ENCODE measurements at regions of chr17 and their contacts with region 1.

Region 1: DNA sequence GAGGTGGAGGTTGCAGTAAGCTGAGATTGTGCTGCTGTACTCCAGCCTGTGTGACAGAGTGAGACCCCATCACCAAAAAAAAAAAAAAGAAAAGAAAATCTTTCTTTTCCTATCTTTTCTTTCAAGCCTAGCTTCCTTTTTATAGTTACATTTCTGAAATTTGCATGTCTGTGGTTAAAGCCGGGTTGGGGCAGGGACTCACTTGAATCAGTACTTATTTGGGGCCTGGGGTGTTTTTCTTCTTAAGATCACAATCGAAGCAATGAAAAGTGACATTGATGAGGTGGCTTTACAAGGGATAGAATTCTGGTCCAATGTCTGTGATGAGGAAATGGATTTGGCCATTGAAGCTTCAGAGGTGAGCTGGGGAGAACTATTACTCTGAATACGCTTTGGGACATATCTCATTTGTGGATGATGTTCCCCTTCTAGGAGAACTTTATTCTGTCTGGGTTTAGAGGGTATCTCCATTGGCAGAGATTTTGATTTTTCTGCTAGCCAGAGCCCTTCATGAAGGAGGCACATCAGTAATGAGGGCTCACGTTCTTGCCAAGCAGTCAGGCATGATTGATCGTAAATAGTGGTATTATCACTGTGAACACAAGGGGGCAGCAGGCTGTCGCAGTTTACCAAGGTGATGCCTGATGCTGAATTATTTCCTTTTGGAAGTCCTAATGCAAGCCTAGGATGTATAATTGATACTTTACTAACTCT is 14.3 kb downstream of the KPNB1 start:
- DNase-seq: peak; percentile 48
- ATAC-seq: peak; percentile 88
- H3K4me3 ChIP-seq: no peak overlapping the region
- H3K27ac ChIP-seq: 0 out of 2 replicates have a peak overlapping the region, but pooled peaks have one; percentile 0
- H3K4me1 ChIP-seq: no peaks in the 10 kb centered on the region
- H3K27me3 ChIP-seq: no peaks in the 10 kb centered on the region
- CTCF ChIP-seq: peak; percentile 71 to 97 (median 87)
- POLR2A ChIP-seq: no peak
- RAD21 ChIP-seq: peak; percentile 74

Region 2: DNA sequence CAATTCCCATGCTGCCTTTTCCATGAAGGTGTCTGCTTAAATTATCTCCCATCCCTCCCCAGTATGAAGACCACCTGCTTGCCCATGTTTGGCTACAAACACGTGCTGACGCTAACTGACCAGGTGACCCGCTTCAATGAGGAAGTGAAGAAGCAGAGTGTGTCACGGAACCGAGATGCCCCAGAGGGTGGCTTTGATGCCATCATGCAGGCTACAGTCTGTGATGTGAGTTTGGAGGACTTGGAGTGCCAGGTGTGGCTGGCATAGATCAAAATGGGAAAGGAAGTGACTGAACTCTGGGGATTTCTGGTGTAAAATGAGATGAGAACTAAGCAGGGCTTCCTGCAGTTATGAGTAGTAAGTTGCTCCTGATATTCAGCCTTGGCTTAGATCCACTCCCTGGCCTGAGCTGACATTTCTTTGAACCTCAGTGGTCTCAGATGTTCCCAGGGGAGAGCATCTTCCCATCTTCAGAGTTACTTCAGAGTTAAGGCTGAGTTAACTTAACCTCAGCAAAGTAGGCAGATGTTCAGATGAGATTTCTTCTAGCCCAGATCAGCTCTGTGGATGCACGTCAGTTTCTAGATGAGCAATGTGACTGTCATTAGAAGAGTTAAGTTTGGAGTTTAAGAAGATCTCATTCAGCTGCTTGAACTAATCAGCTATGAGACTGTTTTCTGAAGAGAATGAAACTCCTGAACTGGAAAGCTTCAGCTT is 377.7 kb before region 1 on chr17:
- CTCF ChIA-PET with region 1: no interaction called
- POLR2A ChIA-PET with region 1: no interaction called
- RAD21 ChIA-PET with region 1: no interaction called
- intact Hi-C with region 1: no loop called
- DNase-seq: no peak
- ATAC-seq: no peak
- H3K4me3 ChIP-seq: no peak overlapping the region
- H3K27ac ChIP-seq: no peak overlapping the region
- H3K4me1 ChIP-seq: peaks cover 5 to 11% of the 10 kb centered on the region in 2 experiments; a peak in 3 of 4 replicates
- H3K27me3 ChIP-seq: no peaks in the 10 kb centered on the region
- CTCF ChIP-seq: no peak
- POLR2A ChIP-seq: no peak
- RAD21 ChIP-seq: no peak

Region 3: DNA sequence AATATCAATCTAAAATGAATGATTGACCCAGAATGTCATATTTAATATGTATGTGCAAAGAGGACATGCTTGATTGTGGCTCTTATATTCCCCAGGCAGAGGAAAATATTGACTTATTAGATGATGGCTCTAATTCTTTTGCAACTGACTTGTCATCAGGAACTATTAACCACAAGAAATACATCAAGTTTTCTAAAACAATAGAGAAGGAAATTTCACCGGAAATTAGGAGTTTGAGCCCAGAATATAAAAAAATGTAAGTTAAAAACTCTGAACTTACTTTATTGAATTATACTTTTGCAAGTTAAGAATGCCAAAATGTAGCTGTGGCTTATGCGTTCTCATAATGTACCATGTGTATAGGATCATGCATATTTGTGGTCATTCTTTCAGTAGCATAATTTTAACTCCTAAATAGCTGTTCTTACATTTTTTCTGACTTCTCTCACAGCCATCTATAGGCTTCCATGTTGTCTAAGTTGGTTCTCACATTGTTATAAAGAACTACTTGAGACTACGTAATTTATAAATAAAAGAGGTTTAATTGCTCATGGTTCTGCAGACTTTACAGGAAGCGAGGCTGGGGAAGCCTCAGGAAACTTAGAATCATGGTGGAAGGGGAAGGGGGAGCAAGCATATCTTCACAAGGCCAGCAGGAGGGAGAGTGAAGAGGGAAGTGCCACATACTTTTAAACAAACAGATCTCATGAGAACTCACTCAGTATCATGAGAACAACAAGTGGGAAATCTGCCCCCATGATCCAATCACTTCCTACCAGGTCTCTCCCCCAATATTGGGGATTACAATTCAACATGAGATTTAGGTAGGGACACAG is 328.8 kb before region 1 on chr17:
- CTCF ChIA-PET with region 1: no interaction called
- POLR2A ChIA-PET with region 1: no interaction called
- RAD21 ChIA-PET with region 1: no interaction called
- intact Hi-C with region 1: no loop called
- DNase-seq: no peak
- ATAC-seq: no peak
- H3K4me3 ChIP-seq: no peak overlapping the region
- H3K27ac ChIP-seq: no peak overlapping the region
- H3K4me1 ChIP-seq: no peaks in the 10 kb centered on the region
- H3K27me3 ChIP-seq: no peaks in the 10 kb centered on the region
- CTCF ChIP-seq: no peak
- POLR2A ChIP-seq: no peak
- RAD21 ChIP-seq: no peak

Region 4: GRCh38 chr17:47649153-47649971 is 14.7 kb before region 1 on chr17 and contains the start of gene KPNB1:
- CTCF ChIA-PET with region 1: interaction called, 11 read pairs
- POLR2A ChIA-PET with region 1: interaction called, 16 read pairs
- RAD21 ChIA-PET with region 1: interaction called in 1 of 2 experiments, 3 read pairs
- intact Hi-C with region 1: loop called (anchors 2 kb)
- DNase-seq: peak; percentile 100
- ATAC-seq: peak; percentile 86
- H3K4me3 ChIP-seq: peak within 1 kb of the TSS; percentile 78 to 83
- H3K27ac ChIP-seq: peak within 1 kb of the TSS; percentile 92
- H3K4me1 ChIP-seq: peaks cover 14 to 21% of the 10 kb centered on the region in 2 experiments; a peak in 3 of 4 replicates
- H3K27me3 ChIP-seq: no peaks in the 10 kb centered on the region
- CTCF ChIP-seq: no peak
- POLR2A ChIP-seq: peak; percentile 79
- RAD21 ChIP-seq: no peak
- total RNA-seq, gene KPNB1: 526 TPM

Region 5: GRCh38 chr17:47742319-47743181 is 78.5 kb after region 1 on chr17:
- CTCF ChIA-PET with region 1: no interaction called
- POLR2A ChIA-PET with region 1: no interaction called
- RAD21 ChIA-PET with region 1: no interaction called
- intact Hi-C with region 1: loop called (anchors 2 kb)
- DNase-seq: no peak
- ATAC-seq: peak; percentile 79
- H3K4me3 ChIP-seq: no peak overlapping the region
- H3K27ac ChIP-seq: no peak overlapping the region
- H3K4me1 ChIP-seq: no peaks in the 10 kb centered on the region
- H3K27me3 ChIP-seq: 0 out of 2 replicates have a peak, but pooled peaks cover 4% of the 10 kb centered on the region
- CTCF ChIP-seq: peak; percentile 45 to 54 (median 46); a peak in 5 of 6 replicates
- POLR2A ChIP-seq: no peak
- RAD21 ChIP-seq: peak; percentile 76

Region 6: DNA sequence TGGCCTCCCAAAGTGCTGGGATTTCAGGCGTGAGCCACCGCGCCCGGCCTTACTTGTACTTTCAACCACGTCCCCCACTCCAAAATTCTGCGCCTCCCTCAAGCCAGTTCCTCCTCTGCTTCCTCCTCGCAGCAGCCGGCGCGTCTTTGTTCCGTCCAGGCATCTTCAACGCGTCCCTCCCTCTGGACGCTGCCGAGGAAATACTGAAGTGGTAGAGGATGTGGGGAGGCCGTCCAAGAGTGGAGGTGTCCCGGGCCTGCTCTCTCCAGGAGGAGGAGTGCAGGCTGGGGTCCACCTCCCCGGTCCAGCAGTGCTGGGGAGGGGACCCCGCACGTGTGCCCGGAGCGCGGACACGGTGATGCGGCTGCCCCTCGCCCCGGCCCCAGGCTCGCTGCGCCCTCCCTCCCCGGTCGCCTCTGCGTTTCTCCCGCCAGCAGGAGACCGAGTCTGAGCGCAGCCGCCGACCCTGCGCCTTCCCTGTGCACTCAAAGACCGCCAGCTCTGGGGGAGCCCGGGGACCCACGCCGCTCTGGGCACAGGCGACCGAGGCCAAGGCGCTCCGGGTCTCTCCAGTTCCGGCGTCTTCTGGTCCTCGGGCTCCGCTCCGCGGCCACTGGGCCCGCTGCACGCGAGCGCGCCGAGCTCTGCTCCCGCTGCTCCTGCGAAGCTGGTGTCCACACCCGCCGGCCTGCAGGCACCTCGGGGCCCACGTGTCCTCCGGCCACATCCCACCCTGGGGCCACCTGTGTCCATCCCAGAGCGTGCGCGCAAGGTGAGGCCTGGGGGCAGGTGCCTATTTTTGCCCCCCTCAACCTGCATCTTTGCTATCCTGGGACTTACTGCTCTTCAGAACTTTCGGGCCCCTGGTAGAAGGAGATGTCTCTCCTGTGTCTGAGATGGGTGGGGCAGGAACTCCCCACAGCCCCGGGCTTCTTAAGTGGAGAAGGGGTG is 125.8 kb after region 1 on chr17:
- CTCF ChIA-PET with region 1: no interaction called
- POLR2A ChIA-PET with region 1: no interaction called
- RAD21 ChIA-PET with region 1: no interaction called
- intact Hi-C with region 1: no loop called
- DNase-seq: no peak
- ATAC-seq: peak; percentile 92
- H3K4me3 ChIP-seq: no peak overlapping the region
- H3K27ac ChIP-seq: no peak overlapping the region
- H3K4me1 ChIP-seq: peaks cover 0 to 4% of the 10 kb centered on the region in 2 experiments; a peak in 1 of 4 replicates
- H3K27me3 ChIP-seq: peaks cover 55% of the 10 kb centered on the region
- CTCF ChIP-seq: peak in 2 of 3 experiments; percentile 39 to 42; a peak in 4 of 6 replicates
- POLR2A ChIP-seq: no peak
- RAD21 ChIP-seq: peak; percentile 56

Measured in HCT116 (cell line).